Activated T-helper 1 cell treated with anti-CD3 and anti-CD28 coated beads, Interleukin-12 subunit alpha, Interleukin-12 subunit beta, Interleukin-2, Interleukin-4 antibody, amounts not matched to agents 30 ng/mL and 10 ng/mL and 1 ng/mL, durations not matched to agents 14 hours and 24 hours and 36 hours (primary cell): ENCODE measurements at regions of chr13 and their contacts with region 1.

Region 1: GRCh38 chr13:41456768-41457588 is at the start of gene RGCC:
- DNase-seq: peak; percentile 87
- H3K4me3 Mint-ChIP-seq: peak within 1 kb of the TSS; percentile 95
- H3K27ac Mint-ChIP-seq: peak within 1 kb of the TSS; percentile 96
- H3K4me1 Mint-ChIP-seq: peaks cover 44% of the 10 kb centered on the region
- H3K27me3 Mint-ChIP-seq: peaks cover 22% of the 10 kb centered on the region
- total RNA-seq, gene RGCC: 135 and 139 TPM in 2 replicates

Region 2: GRCh38 chr13:41310963-41311606 is 145.9 kb before region 1 on chr13 and contains the start of gene NAA16:
- intact Hi-C with region 1: loop called (anchors 2 kb)
- DNase-seq: peak; percentile 92
- H3K4me3 Mint-ChIP-seq: peak within 1 kb of the TSS; percentile 94
- H3K27ac Mint-ChIP-seq: peak within 1 kb of the TSS; percentile 83
- H3K4me1 Mint-ChIP-seq: peaks cover 38% of the 10 kb centered on the region
- H3K27me3 Mint-ChIP-seq: peaks cover 2% of the 10 kb centered on the region
- total RNA-seq, gene NAA16: 31.9 and 33.4 TPM in 2 replicates

Region 3: GRCh38 chr13:41411522-41411921 is 45.5 kb before region 1 on chr13:
- intact Hi-C with region 1: loop called (anchors 5 kb)
- DNase-seq: no peak
- H3K4me3 Mint-ChIP-seq: no peak overlapping the region
- H3K27ac Mint-ChIP-seq: no peak overlapping the region
- H3K4me1 Mint-ChIP-seq: no peaks in the 10 kb centered on the region
- H3K27me3 Mint-ChIP-seq: peaks cover 7% of the 10 kb centered on the region

Region 4: DNA sequence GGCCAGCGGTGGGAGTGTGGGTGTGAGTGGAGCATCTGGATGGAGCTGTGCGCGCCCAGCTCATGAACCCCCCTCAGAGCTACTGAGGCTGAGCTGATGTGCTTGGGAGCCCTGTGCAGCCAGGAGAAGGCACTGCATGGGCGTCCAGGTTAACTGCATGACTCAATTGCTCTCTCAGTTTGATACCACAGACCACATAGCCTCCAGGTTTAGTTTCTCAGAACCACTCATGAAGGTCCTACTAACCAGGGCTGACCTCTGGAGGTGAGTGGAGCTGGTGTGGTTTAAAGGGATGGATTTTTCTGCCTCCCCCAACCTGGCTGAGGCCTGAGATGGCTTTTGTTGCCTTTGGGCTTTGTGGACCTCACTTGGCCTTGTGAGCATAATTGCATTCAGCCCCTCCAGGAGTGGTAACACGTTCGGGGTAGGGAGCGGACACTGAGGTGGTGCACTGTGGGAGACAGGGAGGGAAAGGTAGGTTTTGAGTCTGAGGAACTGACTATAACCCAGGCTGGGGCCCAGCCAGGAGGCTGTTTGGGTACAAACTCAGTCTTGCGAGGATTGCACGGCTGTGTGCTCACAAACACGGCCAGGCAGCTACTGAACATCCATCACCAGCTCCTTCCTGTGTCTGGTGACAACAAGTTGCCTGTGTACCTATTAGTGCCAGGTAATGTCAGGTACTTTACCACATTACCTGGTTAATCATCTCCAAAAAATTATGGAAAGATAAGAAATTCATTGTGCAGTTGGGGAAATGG is 97.8 kb after region 1 on chr13:
- intact Hi-C with region 1: loop called (anchors 1 kb)
- DNase-seq: peak; percentile 16
- H3K4me3 Mint-ChIP-seq: no peak overlapping the region
- H3K27ac Mint-ChIP-seq: peak overlapping the region; percentile 30
- H3K4me1 Mint-ChIP-seq: peaks cover 21% of the 10 kb centered on the region
- H3K27me3 Mint-ChIP-seq: no peaks in the 10 kb centered on the region

Region 5: DNA sequence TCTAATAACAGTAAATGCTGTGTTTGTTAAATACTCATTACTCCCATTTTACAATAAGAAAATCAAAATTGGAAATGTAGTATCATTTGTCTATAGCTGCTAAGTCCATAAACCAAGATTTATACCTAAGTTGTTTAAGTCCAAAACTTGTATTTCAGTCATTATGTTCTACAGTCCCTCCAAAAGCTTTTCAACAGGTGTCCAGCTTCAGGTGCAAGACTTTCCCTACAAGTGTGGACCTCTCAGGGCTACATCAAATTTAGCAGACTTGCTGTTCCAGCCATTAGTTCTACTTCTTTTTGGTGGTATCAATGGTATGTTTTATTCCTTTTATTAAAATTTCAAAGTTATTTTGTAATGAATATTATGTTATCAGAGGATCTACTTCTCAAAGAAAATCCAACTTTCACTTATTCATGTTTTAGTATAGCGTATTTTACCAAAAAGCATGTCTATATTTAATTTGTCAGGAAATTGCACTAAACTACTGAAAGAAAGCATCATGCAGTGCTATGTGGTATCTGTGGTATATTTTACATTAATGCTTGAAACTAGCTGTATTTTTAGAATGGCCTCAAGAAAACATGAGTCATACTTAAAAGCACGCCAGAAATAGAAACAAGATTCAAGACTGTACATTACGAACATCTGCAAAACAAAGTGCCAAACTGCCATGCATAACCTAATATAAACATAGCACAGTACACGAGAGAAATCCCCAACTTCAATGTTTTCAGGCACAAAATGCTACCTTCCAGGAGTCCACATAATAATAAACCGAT is 459.4 kb after region 1 on chr13:
- intact Hi-C with region 1: loop called (anchors 2 kb)
- DNase-seq: no peak
- H3K4me3 Mint-ChIP-seq: peak overlapping the region; percentile 79
- H3K27ac Mint-ChIP-seq: peak overlapping the region; percentile 96
- H3K4me1 Mint-ChIP-seq: peaks cover 58% of the 10 kb centered on the region
- H3K27me3 Mint-ChIP-seq: no peaks in the 10 kb centered on the region